MCF 10A (cell line): ENCODE measurements at regions of chr5 and their contacts with region 1.

Region 1: GRCh38 chr5:124748687-124749594 is 2.5 kb upstream of the ZNF608 start:
- DNase-seq: peak; percentile 97
- H3K4me3 Mint-ChIP-seq: no peak overlapping the region
- H3K27ac Mint-ChIP-seq: no peak overlapping the region
- H3K4me1 Mint-ChIP-seq: peaks cover 12% of the 10 kb centered on the region
- H3K27me3 Mint-ChIP-seq: no peaks in the 10 kb centered on the region
- CTCF ChIP-seq: no peak

Region 2: GRCh38 chr5:123671042-123671441 is 1077.9 kb before region 1 on chr5:
- CTCF ChIA-PET with region 1: no interaction called
- POLR2A ChIA-PET with region 1: no interaction called
- intact Hi-C with region 1: loop called (anchors 5 kb)
- DNase-seq: peak; percentile 75
- H3K4me3 Mint-ChIP-seq: no peak overlapping the region
- H3K27ac Mint-ChIP-seq: no peak overlapping the region
- H3K4me1 Mint-ChIP-seq: no peaks in the 10 kb centered on the region
- H3K27me3 Mint-ChIP-seq: no peaks in the 10 kb centered on the region
- CTCF ChIP-seq: peak; percentile 88

Region 3: DNA sequence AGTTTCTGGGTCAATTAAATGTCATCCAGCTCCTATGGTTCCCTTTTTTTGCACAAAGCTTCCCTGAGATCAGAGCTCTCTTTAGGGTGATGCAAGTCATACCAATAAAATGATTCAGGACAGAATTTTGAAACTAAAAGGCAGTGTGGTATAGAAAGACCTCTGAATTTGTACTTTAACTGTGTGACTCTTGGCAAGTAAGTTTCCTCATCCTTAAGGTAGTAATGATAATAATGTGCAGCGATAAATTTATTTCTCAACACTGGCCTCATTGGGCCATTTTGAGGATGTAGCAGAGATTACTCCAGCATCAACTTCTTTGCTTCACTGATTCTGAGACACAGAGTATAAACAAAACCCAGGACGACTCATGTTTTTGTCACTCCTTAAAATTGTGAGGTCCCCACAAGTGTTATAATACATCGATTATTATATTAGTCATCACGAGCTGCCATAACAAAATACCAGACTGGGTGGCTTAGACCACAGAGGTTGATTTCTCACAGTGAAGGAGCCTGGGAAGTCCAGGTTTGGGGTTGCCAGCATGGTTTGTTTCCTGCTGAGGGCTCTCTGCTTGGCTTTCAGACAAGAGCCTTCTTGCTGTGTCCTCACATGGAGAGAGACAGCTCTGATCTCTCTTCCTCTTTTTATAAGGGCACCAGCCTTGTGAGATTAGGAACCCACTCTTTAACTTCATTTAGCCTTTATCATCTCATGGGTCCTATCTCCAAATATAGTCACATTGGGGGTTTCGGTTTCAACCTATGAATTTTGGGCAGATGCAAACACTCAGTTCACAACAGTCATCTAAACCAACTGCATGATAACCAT is 295.5 kb before region 1 on chr5:
- CTCF ChIA-PET with region 1: no interaction called
- POLR2A ChIA-PET with region 1: no interaction called
- intact Hi-C with region 1: loop called (anchors 10 kb)
- DNase-seq: peak; percentile 52
- H3K4me3 Mint-ChIP-seq: no peak overlapping the region
- H3K27ac Mint-ChIP-seq: no peak overlapping the region
- H3K4me1 Mint-ChIP-seq: peaks cover 16% of the 10 kb centered on the region
- H3K27me3 Mint-ChIP-seq: no peaks in the 10 kb centered on the region
- CTCF ChIP-seq: no peak

Region 4: DNA sequence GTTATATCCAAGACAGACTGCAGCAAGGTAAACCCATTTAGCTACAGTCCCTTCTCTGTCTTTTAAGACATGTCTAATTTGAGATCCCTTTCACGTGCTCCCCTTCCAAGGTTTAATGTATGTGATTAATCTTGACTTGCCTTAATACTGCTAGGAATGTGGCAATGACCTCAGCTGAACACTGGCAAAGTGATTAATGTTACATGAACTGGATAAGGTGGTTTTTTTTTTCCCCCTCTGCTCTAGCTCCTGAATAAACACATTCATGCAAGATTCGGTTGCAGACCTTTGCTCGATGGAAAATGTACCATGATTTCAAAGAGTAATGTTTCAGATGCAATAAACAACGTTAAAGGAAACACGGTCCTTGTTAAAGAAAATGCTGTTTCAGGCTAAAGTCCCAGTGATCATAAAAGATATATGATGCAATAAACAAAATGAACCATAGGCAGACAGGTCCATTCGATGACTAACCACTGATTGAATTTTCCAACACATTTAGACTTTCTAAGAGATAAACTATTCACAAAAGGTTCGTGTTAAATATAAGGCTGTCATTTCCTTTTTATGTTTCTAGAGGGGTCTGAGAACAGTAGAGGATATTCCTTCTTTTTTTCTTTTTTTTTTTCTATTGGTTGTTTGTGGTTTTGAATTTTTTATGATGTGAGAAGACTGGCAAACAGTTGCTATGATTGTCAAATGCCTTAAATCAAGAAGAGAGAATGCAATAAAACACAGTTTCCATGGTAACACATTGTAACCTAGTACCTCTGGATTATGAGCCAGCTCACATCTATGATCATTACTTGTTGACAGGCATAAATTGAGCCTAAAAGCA is 42.2 kb after region 1 on chr5:
- CTCF ChIA-PET with region 1: interaction called, 4 read pairs
- POLR2A ChIA-PET with region 1: interaction called, 12 read pairs
- intact Hi-C with region 1: loop called (anchors 1 kb)
- DNase-seq: peak; percentile 73
- H3K4me3 Mint-ChIP-seq: no peak overlapping the region
- H3K27ac Mint-ChIP-seq: peak overlapping the region; percentile 54
- H3K4me1 Mint-ChIP-seq: peaks cover 21% of the 10 kb centered on the region
- H3K27me3 Mint-ChIP-seq: no peaks in the 10 kb centered on the region
- CTCF ChIP-seq: no peak

Region 5: DNA sequence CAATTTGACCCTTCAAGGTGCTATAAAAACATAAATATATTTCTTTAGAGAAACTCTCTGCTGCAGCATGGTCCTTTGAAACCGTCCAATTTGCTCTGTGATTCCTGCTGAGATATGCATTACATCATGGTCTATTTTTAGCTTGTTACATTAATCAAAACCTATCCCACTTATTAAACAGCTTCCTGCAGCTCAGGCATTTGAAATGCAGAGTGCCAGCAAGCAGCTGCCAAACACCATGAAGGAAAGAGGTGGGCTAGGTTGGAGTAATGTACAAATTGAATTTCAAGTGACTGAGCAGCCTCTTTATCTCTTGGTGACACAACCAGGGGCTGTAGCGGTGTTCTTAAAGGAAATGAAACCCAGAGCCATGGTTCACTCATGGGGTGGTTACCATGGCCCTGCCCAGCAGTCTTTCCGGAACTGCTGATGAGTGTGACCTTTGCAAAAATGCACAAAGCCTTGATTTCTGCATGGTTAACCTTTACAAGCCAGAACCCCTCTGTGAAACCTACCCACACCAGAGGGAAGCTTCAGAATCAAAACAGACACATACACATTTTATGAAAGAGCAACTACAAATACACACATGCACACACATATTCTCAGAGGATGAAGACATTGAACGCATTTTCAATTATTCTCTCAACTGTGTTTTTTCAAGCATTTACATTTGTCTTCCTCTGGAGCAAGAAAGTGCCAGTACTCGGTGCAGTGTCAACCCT is 153.3 kb after region 1 on chr5:
- CTCF ChIA-PET with region 1: no interaction called
- POLR2A ChIA-PET with region 1: interaction called, 11 read pairs
- intact Hi-C with region 1: loop called (anchors 5 kb)
- DNase-seq: no peak
- H3K4me3 Mint-ChIP-seq: no peak overlapping the region
- H3K27ac Mint-ChIP-seq: no peak overlapping the region
- H3K4me1 Mint-ChIP-seq: peaks cover 11% of the 10 kb centered on the region
- H3K27me3 Mint-ChIP-seq: no peaks in the 10 kb centered on the region
- CTCF ChIP-seq: no peak

Region 6: GRCh38 chr5:125412561-125413495 is 663.9 kb after region 1 on chr5:
- CTCF ChIA-PET with region 1: interaction called, 3 read pairs
- POLR2A ChIA-PET with region 1: interaction called, 60 read pairs
- intact Hi-C with region 1: loop called (anchors 1 kb)
- DNase-seq: peak; percentile 75
- H3K4me3 Mint-ChIP-seq: peak overlapping the region; percentile 44
- H3K27ac Mint-ChIP-seq: peak overlapping the region; percentile 91
- H3K4me1 Mint-ChIP-seq: peaks cover 52% of the 10 kb centered on the region
- H3K27me3 Mint-ChIP-seq: no peaks in the 10 kb centered on the region
- CTCF ChIP-seq: peak; percentile 34